Activated naive CD4-positive, alpha-beta T cell treated with anti-CD3 and anti-CD28 coated beads for 36 hours (primary cell): ENCODE measurements at regions of chr17 and their contacts with region 1.

Region 1: DNA sequence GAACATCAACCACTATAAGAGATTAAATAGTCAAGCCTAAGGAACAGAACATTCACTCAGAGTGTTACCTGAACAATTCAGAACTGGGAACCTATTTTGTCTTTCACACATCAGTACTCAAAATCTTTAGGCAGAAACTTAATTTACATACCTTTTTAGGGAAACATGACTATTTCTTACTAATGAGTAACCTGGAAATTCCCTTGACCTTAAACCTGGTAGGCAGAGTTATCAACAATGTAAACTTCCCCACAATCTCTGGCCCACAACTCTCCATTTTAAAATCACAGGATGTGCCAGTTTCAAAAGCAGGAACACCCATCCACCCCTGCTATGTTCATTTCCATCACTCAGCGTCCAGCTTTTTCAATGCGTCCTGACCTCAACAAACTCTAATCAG is 132.9 kb upstream of the ANKFN1 start:
- DNase-seq: peak; percentile 37
- H3K4me3 Mint-ChIP-seq: no peak overlapping the region
- H3K27ac Mint-ChIP-seq: peak overlapping the region; percentile 51
- H3K4me1 Mint-ChIP-seq: peaks cover 52% of the 10 kb centered on the region
- H3K27me3 Mint-ChIP-seq: peaks cover 15% of the 10 kb centered on the region

Region 2: DNA sequence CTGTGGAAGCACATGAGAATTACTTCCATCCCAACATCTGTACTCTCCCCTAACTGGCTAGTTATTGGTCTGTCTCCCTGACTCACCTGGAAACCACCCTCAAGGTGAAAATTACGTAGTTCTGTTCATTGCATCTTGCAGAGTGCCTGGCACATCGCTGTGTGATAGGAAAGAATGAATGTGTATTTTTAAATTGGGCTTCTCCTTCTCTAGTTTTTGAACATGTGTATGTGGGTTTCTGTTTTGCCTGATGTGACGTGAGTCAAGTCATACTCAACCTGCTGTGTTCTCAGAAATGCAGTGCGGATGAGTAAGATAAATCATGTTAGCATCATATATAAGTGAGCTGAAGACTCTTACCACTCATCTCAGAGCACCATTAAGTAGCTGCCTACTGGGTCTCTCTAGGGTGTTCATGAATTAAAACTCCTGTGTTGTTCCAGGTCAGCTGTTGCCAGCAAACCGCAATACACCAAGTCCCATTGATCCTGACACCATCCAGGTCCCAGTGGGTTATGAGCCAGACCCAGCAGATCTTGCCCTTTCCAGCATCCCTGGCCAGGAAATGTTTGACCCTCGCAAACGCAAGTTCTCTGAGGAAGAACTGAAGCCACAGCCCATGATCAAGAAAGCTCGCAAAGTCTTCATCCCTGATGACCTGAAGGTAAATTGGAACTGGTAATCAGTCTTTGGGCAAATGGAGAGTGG is 705.4 kb before region 1 on chr17:
- CTCF ChIA-PET with region 1: no interaction called
- intact Hi-C with region 1: no loop called
- DNase-seq: peak; percentile 35
- H3K4me3 Mint-ChIP-seq: no peak overlapping the region
- H3K27ac Mint-ChIP-seq: peak overlapping the region; percentile 61
- H3K4me1 Mint-ChIP-seq: peaks cover 6% of the 10 kb centered on the region
- H3K27me3 Mint-ChIP-seq: peaks cover 2% of the 10 kb centered on the region

Region 3: GRCh38 chr17:55437159-55437605 is 583.2 kb before region 1 on chr17:
- CTCF ChIA-PET with region 1: no interaction called
- intact Hi-C with region 1: loop called (anchors 5 kb)
- DNase-seq: no peak
- H3K4me3 Mint-ChIP-seq: no peak overlapping the region
- H3K27ac Mint-ChIP-seq: no peak overlapping the region
- H3K4me1 Mint-ChIP-seq: peaks cover 31% of the 10 kb centered on the region
- H3K27me3 Mint-ChIP-seq: peaks cover 4% of the 10 kb centered on the region

Region 4: DNA sequence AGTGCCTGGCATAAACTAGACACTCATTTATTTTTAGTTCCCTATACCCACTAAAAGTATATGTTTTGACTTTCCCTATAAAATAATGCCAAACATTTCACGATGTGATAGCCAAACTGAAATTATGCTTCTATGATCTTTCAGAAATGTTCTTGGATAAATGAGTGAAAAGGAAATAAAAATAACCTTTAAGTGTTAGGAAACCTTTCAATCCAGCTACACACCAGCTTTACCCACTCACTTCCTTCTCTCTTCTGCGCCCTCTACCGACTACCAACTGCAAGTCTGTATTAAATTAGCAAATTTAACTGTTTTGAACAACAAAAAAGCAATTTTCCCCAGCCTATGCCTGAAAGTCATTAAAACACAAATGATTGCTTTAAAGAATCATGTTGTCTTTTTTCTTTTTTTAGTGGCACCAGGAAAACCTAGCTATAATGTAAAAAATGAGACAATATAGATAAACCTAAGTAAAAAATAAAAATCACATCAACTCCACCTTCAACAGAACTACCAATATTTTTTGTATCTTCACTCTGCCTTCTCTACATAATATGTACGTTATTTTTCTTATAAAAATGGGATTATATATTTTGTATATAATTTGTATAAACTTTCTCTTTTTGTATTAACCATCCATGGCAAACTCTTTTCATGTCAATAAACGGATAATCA is 284.5 kb before region 1 on chr17:
- CTCF ChIA-PET with region 1: no interaction called
- intact Hi-C with region 1: loop called (anchors 5 kb)
- DNase-seq: peak; percentile 64
- H3K4me3 Mint-ChIP-seq: no peak overlapping the region
- H3K27ac Mint-ChIP-seq: no peak overlapping the region
- H3K4me1 Mint-ChIP-seq: peaks cover 30% of the 10 kb centered on the region
- H3K27me3 Mint-ChIP-seq: peaks cover 27% of the 10 kb centered on the region

Region 5: DNA sequence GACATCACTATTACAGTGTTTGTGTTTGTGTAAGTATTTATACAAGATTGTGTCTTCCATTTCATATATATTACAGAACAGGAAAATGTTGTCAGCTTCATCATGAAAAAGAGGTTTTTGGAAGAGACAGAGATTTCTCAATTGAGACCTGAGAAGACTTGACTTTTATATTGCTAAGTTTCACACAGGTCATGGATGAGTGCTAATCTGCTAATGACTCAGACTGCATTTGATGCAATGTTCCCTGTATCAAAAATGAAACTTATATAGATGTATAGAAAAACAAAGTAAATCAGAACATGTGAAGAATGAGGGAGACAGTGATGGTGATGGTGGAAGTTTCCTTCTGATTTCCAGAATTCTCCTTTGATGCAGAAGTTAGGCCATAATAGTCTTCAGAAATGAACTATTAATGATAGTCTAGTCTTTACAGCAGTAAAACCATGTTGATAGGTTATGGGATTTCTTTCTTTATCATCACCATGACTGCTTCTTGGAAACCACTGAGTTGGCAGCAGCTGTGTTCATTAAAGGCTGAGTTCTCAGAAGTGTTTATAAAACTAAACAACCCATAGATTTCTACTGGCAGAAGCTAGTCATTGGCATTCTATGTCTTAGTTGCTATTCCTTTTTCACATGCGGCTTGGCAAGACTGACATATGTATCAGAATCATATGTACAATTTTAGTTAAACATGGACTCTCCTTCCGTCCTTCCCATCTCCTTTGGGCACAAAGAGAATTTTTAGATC is 213.4 kb before region 1 on chr17:
- CTCF ChIA-PET with region 1: no interaction called
- intact Hi-C with region 1: loop called (anchors 1 kb)
- DNase-seq: peak; percentile 53
- H3K4me3 Mint-ChIP-seq: no peak overlapping the region
- H3K27ac Mint-ChIP-seq: peak overlapping the region; percentile 75
- H3K4me1 Mint-ChIP-seq: peaks cover 10% of the 10 kb centered on the region
- H3K27me3 Mint-ChIP-seq: peaks cover 10% of the 10 kb centered on the region

Region 6: DNA sequence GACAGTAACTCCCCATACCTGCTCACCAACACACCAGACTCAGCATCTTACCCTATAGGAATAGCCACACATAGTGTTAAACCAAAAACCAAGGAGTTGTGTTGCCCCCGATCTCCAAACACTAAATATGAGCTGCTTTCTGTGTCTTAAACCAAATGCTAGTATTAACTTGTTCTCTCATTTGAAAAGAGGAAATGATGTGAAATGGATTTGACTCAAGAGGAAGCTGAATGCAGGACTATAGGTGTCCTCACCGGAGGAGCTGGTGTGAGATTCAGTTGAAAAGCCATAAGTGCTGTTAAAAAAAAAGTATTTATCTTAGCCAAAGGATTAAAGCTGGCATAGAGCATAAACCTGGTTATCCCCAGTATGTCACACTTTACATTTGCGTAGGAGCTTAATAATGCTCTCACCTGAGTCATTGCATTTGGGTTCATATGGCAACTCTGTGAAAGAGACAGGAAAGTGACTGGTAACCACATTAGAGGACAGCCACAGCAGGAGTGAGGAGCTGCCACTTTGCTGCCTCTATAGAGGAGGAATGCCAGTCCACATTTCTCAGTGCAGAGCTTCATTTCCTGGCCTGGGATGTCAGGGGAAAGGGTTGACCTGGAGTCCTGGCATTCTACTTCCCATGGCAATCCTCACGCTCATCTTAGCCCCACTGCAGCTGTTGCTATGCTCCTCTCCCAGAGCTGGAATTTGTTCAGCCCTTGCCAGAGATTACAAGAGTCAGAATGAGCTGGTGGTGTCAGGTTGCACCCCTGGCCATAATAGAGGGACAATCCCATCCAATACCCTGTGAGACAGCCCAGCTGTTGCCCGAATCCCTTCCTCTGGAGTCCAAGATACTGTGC is 10.3 kb before region 1 on chr17:
- CTCF ChIA-PET with region 1: interaction called, 6 read pairs
- intact Hi-C with region 1: loop called (anchors 1 kb)
- DNase-seq: peak; percentile 48
- H3K4me3 Mint-ChIP-seq: no peak overlapping the region
- H3K27ac Mint-ChIP-seq: peak overlapping the region; percentile 68
- H3K4me1 Mint-ChIP-seq: peaks cover 19% of the 10 kb centered on the region
- H3K27me3 Mint-ChIP-seq: no peaks in the 10 kb centered on the region

Region 7: DNA sequence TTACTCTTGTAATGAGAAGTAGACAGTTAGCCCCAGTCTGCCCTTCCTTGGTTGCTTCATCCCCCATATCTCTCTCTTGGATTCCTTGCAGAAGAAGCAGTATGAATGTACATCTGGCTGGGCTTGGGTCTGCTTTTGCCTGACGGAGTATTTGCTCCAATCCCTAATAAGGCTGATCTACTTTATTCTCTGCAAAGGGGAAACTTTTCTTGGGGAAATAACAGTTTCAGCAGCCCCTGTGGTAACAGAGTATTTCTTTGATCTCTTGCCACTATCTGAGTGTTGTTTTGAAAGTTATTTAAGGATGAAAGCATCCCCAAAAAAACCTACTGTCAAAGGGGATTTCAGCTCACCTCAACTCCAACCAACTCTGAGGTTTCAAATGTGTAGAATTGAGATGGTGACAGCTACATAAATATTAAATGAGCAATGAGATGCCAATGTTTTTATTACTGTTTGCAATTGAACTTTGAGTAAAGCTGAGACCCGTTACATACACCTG is 404.2 kb after region 1 on chr17:
- CTCF ChIA-PET with region 1: no interaction called
- intact Hi-C with region 1: loop called (anchors 1 kb)
- DNase-seq: peak; percentile 15
- H3K4me3 Mint-ChIP-seq: no peak overlapping the region
- H3K27ac Mint-ChIP-seq: no peak overlapping the region
- H3K4me1 Mint-ChIP-seq: peaks cover 18% of the 10 kb centered on the region
- H3K27me3 Mint-ChIP-seq: peaks cover 14% of the 10 kb centered on the region